Activated T-helper 1 cell treated with anti-CD3 and anti-CD28 coated beads, Interleukin-12 subunit alpha, Interleukin-12 subunit beta, Interleukin-2, Interleukin-4 antibody, amounts not matched to agents 30 ng/mL and 10 ng/mL and 1 ng/mL, durations not matched to agents 14 hours and 24 hours and 36 hours (primary cell): ENCODE measurements at regions of chr2 and their contacts with region 1.

Region 1: DNA sequence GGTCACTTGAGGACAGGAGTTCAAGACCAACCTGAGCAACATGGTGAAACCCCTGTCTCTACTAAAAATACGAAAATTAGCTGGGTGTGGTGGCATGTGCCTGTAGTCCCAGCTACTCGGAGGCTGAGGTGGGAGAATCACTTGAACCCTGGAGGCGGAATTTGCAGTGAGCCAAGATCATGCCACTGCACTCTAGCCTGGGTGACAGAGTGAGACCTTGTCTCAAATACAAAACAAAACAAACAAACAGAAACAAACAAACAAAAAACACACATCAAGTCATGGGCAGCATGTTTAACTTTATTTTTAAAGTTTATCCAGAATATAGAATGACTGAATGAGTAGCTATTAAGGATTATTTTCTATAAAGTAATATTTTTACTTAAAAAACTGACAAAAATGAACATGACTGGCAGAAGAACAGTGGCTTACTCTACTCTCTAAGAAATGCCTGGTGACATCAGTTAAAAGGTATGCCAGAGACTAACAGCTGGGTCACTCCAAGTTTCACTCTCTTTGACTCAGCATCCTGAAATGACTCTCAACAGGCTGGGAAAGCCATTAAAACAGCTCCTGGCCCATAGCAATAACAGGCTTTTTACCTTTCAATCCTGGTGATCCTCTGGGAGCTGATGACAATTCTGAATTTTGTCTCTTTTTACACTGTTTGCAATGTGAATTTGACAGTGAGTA is 281.6 kb upstream of the STON1 start:
- DNase-seq: no peak
- H3K4me3 Mint-ChIP-seq: no peak overlapping the region
- H3K27ac Mint-ChIP-seq: no peak overlapping the region
- H3K4me1 Mint-ChIP-seq: peaks cover 11% of the 10 kb centered on the region
- H3K27me3 Mint-ChIP-seq: peaks cover 2% of the 10 kb centered on the region

Region 2: DNA sequence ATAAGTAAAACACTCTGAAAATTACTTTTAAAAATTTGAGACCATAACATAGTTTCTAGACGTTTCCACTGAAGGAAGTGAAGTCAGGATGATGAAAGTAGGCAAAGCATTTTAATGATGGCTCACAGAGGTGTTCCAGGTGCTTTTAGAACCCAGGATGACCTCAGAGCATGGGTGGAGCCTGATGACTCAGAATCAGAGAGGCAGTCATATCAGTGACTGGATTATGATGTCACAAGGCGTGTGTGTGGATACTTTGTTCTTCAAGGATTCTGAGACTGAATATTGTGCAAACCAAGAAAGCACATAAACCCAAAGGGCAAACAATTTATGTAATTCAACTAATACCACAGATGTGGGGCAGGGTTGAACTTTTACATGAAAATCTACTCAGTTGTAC is 134.1 kb before region 1 on chr2:
- intact Hi-C with region 1: loop called (anchors 2 kb)
- DNase-seq: peak; percentile 55
- H3K4me3 Mint-ChIP-seq: no peak overlapping the region
- H3K27ac Mint-ChIP-seq: peak overlapping the region; percentile 5
- H3K4me1 Mint-ChIP-seq: peaks cover 31% of the 10 kb centered on the region
- H3K27me3 Mint-ChIP-seq: peaks cover 1% of the 10 kb centered on the region

Region 3: GRCh38 chr2:48272199-48272598 is 23.8 kb after region 1 on chr2:
- intact Hi-C with region 1: loop called (anchors 1 kb)
- DNase-seq: no peak
- H3K4me3 Mint-ChIP-seq: no peak overlapping the region
- H3K27ac Mint-ChIP-seq: no peak overlapping the region
- H3K4me1 Mint-ChIP-seq: peaks cover 13% of the 10 kb centered on the region
- H3K27me3 Mint-ChIP-seq: no peaks in the 10 kb centered on the region

Region 4: GRCh38 chr2:48315896-48316194 is 67.5 kb after region 1 on chr2:
- intact Hi-C with region 1: loop called (anchors 1 kb)
- DNase-seq: peak; percentile 31
- H3K4me3 Mint-ChIP-seq: peak overlapping the region; percentile 93
- H3K27ac Mint-ChIP-seq: peak overlapping the region; percentile 95
- H3K4me1 Mint-ChIP-seq: peaks cover 44% of the 10 kb centered on the region
- H3K27me3 Mint-ChIP-seq: no peaks in the 10 kb centered on the region

Region 5: DNA sequence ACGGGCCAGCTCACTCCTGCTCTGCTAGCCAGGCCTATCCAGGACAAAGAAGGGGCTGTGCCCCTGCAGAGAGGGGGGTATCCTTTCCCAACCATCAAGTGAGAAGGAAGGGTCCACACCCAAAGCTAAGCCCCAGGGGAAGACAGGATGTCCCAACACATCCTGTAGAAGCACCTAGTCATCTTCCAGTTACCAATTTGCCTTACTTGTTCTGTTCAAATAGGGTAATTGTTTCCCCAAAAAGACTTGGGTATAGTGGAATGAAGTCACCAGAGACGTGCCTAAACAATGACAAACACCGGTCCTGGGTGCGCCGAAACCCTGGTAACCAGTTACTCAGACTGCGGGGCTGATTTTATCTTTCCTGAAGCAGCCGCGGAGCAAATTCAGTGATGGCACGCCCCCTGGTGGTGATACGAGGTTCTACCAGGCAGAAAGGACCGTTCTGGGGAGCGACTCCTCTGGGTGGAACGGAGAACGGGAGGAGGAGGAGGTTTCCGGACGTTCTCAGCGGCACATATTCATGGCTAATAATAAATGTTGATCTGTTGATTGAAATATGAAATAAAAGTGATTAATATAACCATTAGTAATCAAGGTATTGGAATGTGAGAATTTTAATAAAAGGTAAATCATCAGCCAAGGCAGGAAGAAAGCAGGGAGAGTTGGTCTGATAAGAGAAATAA is 172.3 kb after region 1 on chr2:
- intact Hi-C with region 1: loop called (anchors 5 kb)
- DNase-seq: peak; percentile 88
- H3K4me3 Mint-ChIP-seq: no peak overlapping the region
- H3K27ac Mint-ChIP-seq: peak overlapping the region; percentile 72
- H3K4me1 Mint-ChIP-seq: peaks cover 52% of the 10 kb centered on the region
- H3K27me3 Mint-ChIP-seq: peaks cover 2% of the 10 kb centered on the region